IMR-90 (cell line): ENCODE measurements at regions of chr5 and their contacts with region 1.

Region 1: DNA sequence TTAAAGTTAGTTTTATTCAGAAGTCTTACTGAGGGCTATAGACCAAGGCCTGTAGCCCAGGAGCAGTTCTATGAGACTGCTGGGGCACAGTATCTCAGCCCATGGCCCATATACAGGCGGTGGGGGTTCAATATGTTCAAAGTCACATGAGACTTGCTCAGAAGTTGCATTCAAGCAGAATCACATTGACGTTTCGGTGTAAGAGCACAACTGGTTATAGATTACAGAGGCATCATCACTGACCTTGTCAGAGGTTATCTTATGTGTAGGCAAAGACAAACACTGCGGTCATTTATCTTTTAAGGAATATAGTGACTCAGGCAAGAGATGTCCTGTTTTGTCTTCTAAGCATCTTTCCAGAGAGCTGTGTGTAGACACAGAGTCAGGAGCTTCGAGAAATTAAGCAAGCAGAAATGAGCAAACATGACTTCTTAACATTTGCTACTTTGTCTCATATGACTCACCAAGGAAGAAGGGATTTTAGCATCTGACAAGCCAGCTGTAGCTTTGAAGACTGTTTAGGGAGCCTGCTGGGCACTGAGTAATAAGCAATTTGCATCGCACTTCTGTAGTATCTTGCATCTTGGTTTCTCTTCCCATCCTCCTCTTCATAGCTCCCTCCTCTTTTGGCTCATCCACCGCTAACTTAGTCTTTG is 12.9 kb upstream of the F2RL1 start:
- DNase-seq: peak; percentile 100
- ATAC-seq: peak; percentile 84
- H3K4me3 ChIP-seq: no peak overlapping the region
- H3K27ac ChIP-seq: peak overlapping the region; percentile 83
- H3K4me1 ChIP-seq: peaks cover 17% of the 10 kb centered on the region
- H3K27me3 ChIP-seq: no peaks in the 10 kb centered on the region
- CTCF ChIP-seq: no peak
- POLR2A ChIP-seq: peak; percentile 83
- RAD21 ChIP-seq: peak; percentile 34

Region 2: DNA sequence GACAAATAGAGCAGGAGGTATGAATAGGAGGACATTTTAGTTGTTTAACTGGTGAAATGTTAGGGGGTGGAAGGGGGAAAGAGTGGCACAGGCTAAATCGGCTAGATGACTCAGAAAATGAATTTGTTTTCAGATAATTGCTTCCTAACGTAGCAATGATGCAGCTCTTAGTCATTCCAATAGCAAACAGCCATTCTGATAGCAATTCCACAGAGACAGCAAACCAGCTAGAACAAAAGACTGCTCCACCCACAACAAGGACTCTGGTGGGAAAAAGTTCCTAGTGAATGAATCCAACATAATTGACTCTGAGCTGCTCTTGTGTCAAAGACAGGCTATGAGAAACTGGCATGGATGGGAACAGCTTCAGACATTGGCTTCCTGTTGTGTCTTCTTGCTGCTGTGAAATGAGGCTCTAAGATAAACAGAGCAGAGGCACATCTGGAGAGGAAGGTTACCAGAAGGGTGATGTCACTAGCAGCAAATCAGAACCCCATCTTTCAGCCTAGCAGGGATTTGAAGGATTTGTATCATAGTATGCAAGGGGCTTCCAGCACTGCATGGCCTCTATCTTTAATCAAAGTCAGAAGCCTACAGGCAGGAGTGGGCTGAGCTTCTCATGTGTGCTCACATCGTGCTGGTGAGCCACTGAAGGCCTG is 15.2 kb before region 1 on chr5:
- CTCF ChIA-PET with region 1: interaction called, 3 read pairs
- POLR2A ChIA-PET with region 1: no interaction called
- dilution Hi-C with region 1: no loop called
- in situ Hi-C with region 1: no loop called
- intact Hi-C with region 1: loop called (anchors 1 kb)
- DNase-seq: peak; percentile 100
- ATAC-seq: peak; percentile 73
- H3K4me3 ChIP-seq: no peak overlapping the region
- H3K27ac ChIP-seq: peak overlapping the region; percentile 74
- H3K4me1 ChIP-seq: peaks cover 20% of the 10 kb centered on the region
- H3K27me3 ChIP-seq: no peaks in the 10 kb centered on the region
- CTCF ChIP-seq: no peak
- POLR2A ChIP-seq: peak; percentile 68; the same call in 1 of the 2 replicates
- RAD21 ChIP-seq: 0 out of 2 replicates have a peak, but pooled peaks have one; percentile 16

Region 3: GRCh38 chr5:76867038-76867437 is 61.1 kb after region 1 on chr5:
- CTCF ChIA-PET with region 1: no interaction called
- POLR2A ChIA-PET with region 1: no interaction called
- dilution Hi-C with region 1: no loop called
- in situ Hi-C with region 1: no loop called
- intact Hi-C with region 1: no loop called
- DNase-seq: peak; percentile 57
- ATAC-seq: peak; percentile 69
- H3K4me3 ChIP-seq: no peak overlapping the region
- H3K27ac ChIP-seq: no peak overlapping the region
- H3K4me1 ChIP-seq: peaks cover 5% of the 10 kb centered on the region
- H3K27me3 ChIP-seq: no peaks in the 10 kb centered on the region
- CTCF ChIP-seq: no peak
- POLR2A ChIP-seq: no peak
- RAD21 ChIP-seq: no peak

Region 4: DNA sequence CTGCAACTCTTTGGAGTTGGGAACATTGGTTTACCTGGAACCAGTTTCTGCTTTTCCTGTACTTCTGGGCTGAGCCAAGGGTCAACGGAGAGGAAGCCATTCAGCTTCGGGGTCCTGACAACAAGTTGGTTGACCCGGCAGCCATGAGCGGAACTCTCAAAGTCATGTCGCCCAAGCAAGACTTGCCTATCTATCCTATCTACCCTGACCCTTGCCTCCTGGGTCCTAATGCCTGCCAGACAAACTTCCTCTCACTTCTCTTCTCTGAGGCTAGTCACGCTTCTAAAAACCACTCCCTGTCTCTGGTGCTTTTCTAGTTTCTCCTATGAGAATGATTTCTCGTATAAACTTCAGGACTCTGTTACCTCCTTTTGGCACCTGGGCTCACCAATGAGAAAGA is 102.2 kb after region 1 on chr5:
- CTCF ChIA-PET with region 1: no interaction called
- POLR2A ChIA-PET with region 1: no interaction called
- dilution Hi-C with region 1: no loop called
- in situ Hi-C with region 1: no loop called
- intact Hi-C with region 1: no loop called
- DNase-seq: no peak
- ATAC-seq: no peak
- H3K4me3 ChIP-seq: no peak overlapping the region
- H3K27ac ChIP-seq: no peak overlapping the region
- H3K4me1 ChIP-seq: no peaks in the 10 kb centered on the region
- H3K27me3 ChIP-seq: no peaks in the 10 kb centered on the region; the same call in 1 of the 2 replicates
- CTCF ChIP-seq: no peak
- POLR2A ChIP-seq: no peak
- RAD21 ChIP-seq: no peak